ENCODE measurements at regions of chr1 and their contacts with region 1.

Region 1: GRCh38 chr1:201686714-201687455 is 142.1 kb upstream of the IPO9 start:
- DNase-seq: peak in 1 of 2 experiments; percentile 64
- H3K4me3 ChIP-seq: no peak overlapping the region
- H3K27ac ChIP-seq: no peak overlapping the region
- H3K4me1 ChIP-seq: peaks cover 12% of the 10 kb centered on the region; the same call in 1 of the 2 replicates
- H3K27me3 ChIP-seq: no peaks in the 10 kb centered on the region
- CTCF ChIP-seq: no peak

Region 2: DNA sequence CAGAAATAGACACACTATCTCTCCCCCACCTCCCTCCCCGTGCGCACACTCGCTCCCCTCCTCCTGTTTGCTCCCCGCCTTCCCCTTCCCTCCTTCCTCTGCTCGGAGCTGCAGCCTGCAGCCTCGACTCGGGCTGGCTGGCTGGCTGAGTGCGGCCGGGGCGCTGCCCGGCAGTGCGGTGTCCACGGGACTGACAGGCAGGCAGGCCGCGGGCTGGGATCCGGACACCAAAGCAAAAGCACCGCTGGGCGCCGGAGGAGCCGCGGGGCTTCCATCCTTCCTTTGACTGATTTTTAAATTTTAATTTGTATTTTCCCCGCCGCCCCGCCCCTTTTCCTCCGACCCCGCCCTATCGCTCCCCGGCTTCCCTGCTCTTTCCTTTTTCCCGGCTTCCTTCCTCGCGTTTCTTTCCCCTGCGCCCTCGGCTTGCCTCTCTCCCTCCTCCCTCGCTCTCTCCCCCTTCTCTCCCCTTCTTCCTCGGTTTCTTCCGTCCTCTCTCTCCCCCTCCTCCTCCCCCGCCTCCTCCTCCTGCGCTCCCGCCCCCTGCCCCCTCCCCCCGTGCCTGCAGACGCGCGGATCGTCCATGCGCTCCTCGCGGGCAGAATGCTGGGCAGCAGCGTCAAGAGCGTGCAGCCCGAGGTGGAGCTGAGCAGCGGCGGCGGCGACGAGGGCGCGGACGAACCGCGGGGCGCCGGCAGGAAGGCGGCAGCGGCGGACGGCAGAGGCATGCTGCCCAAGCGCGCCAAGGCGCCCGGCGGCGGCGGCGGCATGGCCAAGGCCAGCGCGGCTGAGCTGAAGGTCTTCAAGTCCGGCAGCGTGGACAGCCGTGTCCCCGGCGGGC is 38.6 kb before region 1 on chr1:
- CTCF ChIA-PET with region 1: interaction called, 29 read pairs
- POLR2A ChIA-PET with region 1: no interaction called
- intact Hi-C with region 1: no loop called
- DNase-seq: peak; percentile 8 to 52
- H3K4me3 ChIP-seq: peak overlapping the region; percentile 55; the same call in 1 of the 2 replicates
- H3K27ac ChIP-seq: no peak overlapping the region
- H3K4me1 ChIP-seq: no peaks in the 10 kb centered on the region
- H3K27me3 ChIP-seq: peaks cover 5% of the 10 kb centered on the region; the same call in 1 of the 2 replicates
- CTCF ChIP-seq: no peak